CD8-positive, alpha-beta T cell (primary cell): ENCODE measurements at regions of chr2 and their contacts with region 1.

Region 1: DNA sequence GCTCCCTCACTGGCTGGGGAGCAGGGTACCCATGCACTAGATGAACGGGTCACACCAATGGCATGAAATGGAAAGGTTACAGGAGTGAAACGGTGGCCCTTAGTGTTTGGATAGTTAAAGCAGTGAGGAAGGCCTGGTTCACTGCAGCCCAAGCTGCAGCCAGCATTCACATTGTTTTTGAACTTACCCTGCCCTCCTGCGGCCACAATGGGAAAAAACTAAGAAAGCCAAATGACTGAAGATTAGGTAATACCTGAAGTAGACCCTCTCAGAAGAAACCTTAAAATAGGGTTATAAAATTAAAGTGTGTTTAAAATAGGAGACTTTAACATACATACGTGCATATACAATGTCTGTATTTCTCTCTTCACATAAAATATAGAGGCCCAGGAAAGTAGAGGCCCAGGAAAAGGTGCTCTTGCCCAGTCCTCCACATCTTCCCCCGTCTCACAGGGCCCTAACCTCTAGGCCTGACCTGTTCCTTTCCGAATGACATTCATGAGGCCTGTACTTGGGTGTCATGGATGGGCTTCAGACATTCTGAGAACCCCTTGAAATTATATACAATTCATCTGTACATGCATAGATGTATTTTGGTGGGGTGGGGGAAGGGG is 33.3 kb downstream of the DOK1 start:
- DNase-seq: peak; percentile 36 to 79 (median 58)
- ATAC-seq: peak; percentile 87
- H3K4me3 ChIP-seq: no peak overlapping the region
- H3K4me3 Mint-ChIP-seq: no peak overlapping the region
- H3K27ac ChIP-seq: no peak overlapping the region
- H3K27ac Mint-ChIP-seq: no peak overlapping the region
- H3K4me1 ChIP-seq: no peaks in the 10 kb centered on the region
- H3K4me1 Mint-ChIP-seq: peaks cover 6% of the 10 kb centered on the region
- H3K27me3 ChIP-seq: no peaks in the 10 kb centered on the region
- H3K27me3 Mint-ChIP-seq: peaks cover 8% of the 10 kb centered on the region
- CTCF ChIP-seq: peak; percentile 52

Region 2: DNA sequence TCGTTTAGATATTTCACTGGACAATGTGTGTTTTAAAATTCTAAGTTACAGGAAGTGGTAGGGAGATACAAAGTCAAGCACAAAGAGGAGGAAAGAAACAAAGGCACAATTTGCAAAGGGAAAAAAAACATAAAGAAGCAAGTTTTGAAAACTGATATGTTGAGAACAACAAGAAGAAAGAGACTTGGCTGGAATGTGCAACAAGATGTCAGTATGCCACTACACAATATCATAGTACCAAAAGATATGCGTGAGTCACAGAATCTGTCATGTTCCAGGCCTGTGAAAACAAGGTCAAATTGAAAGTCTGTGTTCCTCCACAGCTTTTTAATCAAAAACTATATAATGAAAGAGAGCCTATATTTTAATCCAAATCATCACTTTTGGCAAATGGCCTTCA is 1773.9 kb before region 1 on chr2:
- CTCF ChIA-PET with region 1: no interaction called
- POLR2A ChIA-PET with region 1: no interaction called
- intact Hi-C with region 1: no loop called
- DNase-seq: no peak
- ATAC-seq: no peak
- H3K4me3 ChIP-seq: no peak overlapping the region
- H3K4me3 Mint-ChIP-seq: no peak overlapping the region
- H3K27ac ChIP-seq: no peak overlapping the region
- H3K27ac Mint-ChIP-seq: no peak overlapping the region
- H3K4me1 ChIP-seq: no peaks in the 10 kb centered on the region
- H3K4me1 Mint-ChIP-seq: peaks cover 26% of the 10 kb centered on the region
- H3K27me3 ChIP-seq: no peaks in the 10 kb centered on the region
- H3K27me3 Mint-ChIP-seq: no peaks in the 10 kb centered on the region
- CTCF ChIP-seq: no peak

Region 3: DNA sequence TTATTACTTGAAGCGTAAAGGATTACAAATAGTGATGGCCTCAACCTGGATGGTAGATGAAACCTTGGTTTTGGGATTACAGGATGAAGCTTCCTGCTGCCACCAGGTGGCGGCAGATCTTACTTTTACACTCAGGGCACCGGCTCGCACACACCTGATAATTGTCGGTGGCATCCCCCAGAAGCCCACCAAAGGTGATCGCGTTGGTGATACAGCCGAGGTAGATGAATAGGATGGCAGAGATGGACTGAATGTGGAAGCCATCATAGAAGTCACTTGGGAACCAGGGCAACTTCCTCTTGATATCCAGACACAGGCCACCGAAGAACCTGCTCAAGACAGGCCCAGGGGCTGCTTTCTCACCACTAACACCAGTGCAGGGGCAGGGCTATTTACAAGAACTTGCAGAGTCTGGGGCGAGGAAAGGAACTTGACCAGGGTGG is 337.6 kb before region 1 on chr2:
- CTCF ChIA-PET with region 1: interaction called, 12 read pairs
- POLR2A ChIA-PET with region 1: no interaction called
- intact Hi-C with region 1: loop called in 1 of 2 experiments (anchors 1 kb)
- DNase-seq: peak; percentile 7 to 79 (median 54)
- ATAC-seq: peak; percentile 75
- H3K4me3 ChIP-seq: no peak overlapping the region
- H3K4me3 Mint-ChIP-seq: no peak overlapping the region
- H3K27ac ChIP-seq: no peak overlapping the region
- H3K27ac Mint-ChIP-seq: no peak overlapping the region
- H3K4me1 ChIP-seq: peaks cover 3% of the 10 kb centered on the region
- H3K4me1 Mint-ChIP-seq: peaks cover 2% of the 10 kb centered on the region
- H3K27me3 ChIP-seq: no peaks in the 10 kb centered on the region
- H3K27me3 Mint-ChIP-seq: no peaks in the 10 kb centered on the region
- CTCF ChIP-seq: peak; percentile 83

Region 4: GRCh38 chr2:74553892-74554645 is 33.7 kb before region 1 on chr2 and contains the start of gene LOXL3:
- CTCF ChIA-PET with region 1: interaction called, 6 read pairs
- POLR2A ChIA-PET with region 1: no interaction called
- intact Hi-C with region 1: loop called in 1 of 2 experiments (anchors 1 kb)
- DNase-seq: peak in 6 of 9 experiments; percentile 58 to 87 (median 70)
- ATAC-seq: peak; percentile 63
- H3K4me3 ChIP-seq: peak within 1 kb of the TSS; percentile 97 to 100
- H3K4me3 Mint-ChIP-seq: peak within 1 kb of the TSS; percentile 91
- H3K27ac ChIP-seq: peak within 1 kb of the TSS; percentile 66 to 77
- H3K27ac Mint-ChIP-seq: peak within 1 kb of the TSS; percentile 84
- H3K4me1 ChIP-seq: peaks cover 17% of the 10 kb centered on the region
- H3K4me1 Mint-ChIP-seq: peaks cover 10% of the 10 kb centered on the region
- H3K27me3 ChIP-seq: peaks cover 2 to 11% of the 10 kb centered on the region in 2 experiments
- H3K27me3 Mint-ChIP-seq: peaks cover 19% of the 10 kb centered on the region
- CTCF ChIP-seq: no peak
- total RNA-seq, gene LOXL3: not detected

Region 5: DNA sequence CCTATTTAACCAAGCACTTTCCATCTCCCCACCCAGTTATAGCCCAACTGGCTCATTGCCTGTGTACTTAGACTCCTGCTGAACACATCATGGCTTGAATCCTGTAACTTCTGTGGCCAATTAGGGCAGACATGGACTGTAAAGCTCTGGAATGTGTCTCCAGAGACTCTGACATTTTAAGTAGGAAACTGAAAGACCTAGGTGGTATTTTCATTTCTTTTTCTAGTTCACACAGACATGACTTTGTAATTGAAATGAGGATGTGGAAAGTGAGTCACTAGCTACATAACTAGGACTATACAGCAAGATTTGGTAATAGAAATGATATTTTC is 21.1 kb before region 1 on chr2:
- CTCF ChIA-PET with region 1: interaction called, 19 read pairs
- POLR2A ChIA-PET with region 1: no interaction called
- intact Hi-C with region 1: no loop called
- DNase-seq: no peak
- ATAC-seq: no peak
- H3K4me3 ChIP-seq: no peak overlapping the region
- H3K4me3 Mint-ChIP-seq: no peak overlapping the region
- H3K27ac ChIP-seq: no peak overlapping the region
- H3K27ac Mint-ChIP-seq: no peak overlapping the region
- H3K4me1 ChIP-seq: no peaks in the 10 kb centered on the region
- H3K4me1 Mint-ChIP-seq: no peaks in the 10 kb centered on the region
- H3K27me3 ChIP-seq: no peaks in the 10 kb centered on the region
- H3K27me3 Mint-ChIP-seq: peaks cover 30% of the 10 kb centered on the region
- CTCF ChIP-seq: no peak

Region 6: DNA sequence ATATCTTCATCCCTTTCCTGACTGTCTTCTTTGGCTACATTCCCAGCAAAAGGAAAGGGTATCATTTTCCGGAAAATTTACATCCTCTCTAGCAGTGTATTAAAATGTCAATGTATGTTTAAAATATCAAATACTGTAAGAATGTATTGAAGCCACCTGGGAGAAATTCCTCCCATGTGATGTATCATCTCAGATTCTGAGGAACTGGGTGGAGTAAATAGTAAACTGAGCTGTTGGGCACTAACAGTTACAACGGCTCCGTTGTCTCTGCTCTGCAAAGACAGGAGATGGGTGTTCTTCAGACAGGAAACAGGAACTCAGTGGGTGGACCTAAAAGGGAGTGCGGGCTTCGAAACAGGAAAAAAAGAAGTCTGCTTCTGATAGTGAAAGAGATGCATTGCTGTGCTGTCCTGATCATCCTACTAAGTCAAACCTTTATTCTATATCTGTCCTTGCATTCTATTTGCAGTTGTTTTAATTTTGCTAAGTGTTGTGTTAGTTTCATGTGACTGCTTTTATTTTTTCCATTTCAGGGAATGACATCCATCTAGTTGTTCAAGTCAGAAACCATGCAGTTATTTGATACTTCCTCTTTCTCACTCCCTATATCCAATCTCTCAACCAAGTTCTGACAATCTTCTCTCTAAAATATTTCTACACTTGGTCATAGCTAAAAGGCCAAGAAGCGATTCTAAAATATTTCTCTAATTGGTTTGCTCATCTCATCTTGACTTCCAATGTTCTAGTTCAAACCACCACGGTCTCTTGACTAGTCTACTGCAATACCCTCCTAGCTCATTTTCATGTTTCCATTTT is 13.8 kb before region 1 on chr2:
- CTCF ChIA-PET with region 1: interaction called, 19 read pairs
- POLR2A ChIA-PET with region 1: no interaction called
- intact Hi-C with region 1: no loop called
- DNase-seq: peak in 4 of 9 experiments; percentile 27 to 63 (median 45)
- ATAC-seq: peak; percentile 77
- H3K4me3 ChIP-seq: peak overlapping the region; percentile 0 to 3
- H3K4me3 Mint-ChIP-seq: peak overlapping the region; percentile 66
- H3K27ac ChIP-seq: peak overlapping the region in 1 of 2 experiments; percentile 47
- H3K27ac Mint-ChIP-seq: peak overlapping the region; percentile 75
- H3K4me1 ChIP-seq: peaks cover 14% of the 10 kb centered on the region
- H3K4me1 Mint-ChIP-seq: peaks cover 15% of the 10 kb centered on the region
- H3K27me3 ChIP-seq: no peaks in the 10 kb centered on the region
- H3K27me3 Mint-ChIP-seq: peaks cover 6% of the 10 kb centered on the region
- CTCF ChIP-seq: no peak

Region 7: GRCh38 chr2:74625658-74626425 is 38.1 kb after region 1 on chr2:
- CTCF ChIA-PET with region 1: no interaction called
- POLR2A ChIA-PET with region 1: no interaction called
- intact Hi-C with region 1: no loop called
- DNase-seq: no peak
- ATAC-seq: no peak
- H3K4me3 ChIP-seq: no peak overlapping the region
- H3K4me3 Mint-ChIP-seq: no peak overlapping the region
- H3K27ac ChIP-seq: no peak overlapping the region
- H3K27ac Mint-ChIP-seq: no peak overlapping the region
- H3K4me1 ChIP-seq: no peaks in the 10 kb centered on the region
- H3K4me1 Mint-ChIP-seq: no peaks in the 10 kb centered on the region
- H3K27me3 ChIP-seq: no peaks in the 10 kb centered on the region
- H3K27me3 Mint-ChIP-seq: no peaks in the 10 kb centered on the region
- CTCF ChIP-seq: no peak

Region 8: DNA sequence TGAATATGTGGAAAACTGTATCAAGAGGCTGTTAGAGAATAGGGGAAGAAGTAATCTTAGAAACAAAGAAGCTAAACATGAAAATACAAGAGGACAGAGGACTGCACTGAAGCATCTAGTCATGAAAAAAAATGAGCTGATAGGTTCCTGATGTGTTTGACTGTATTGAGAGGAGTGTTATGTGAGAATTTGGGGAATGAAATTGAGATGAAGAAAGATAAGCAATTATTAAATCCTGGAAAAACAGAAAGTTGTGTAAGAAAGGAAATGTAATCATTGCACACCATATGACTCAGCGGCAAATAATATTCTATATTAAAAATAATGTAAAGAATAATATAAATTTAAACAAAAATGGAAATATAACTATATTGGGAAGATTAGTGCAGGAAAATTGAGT is 137.5 kb after region 1 on chr2:
- CTCF ChIA-PET with region 1: no interaction called
- POLR2A ChIA-PET with region 1: no interaction called
- intact Hi-C with region 1: no loop called
- DNase-seq: no peak
- ATAC-seq: no peak
- H3K4me3 ChIP-seq: no peak overlapping the region
- H3K4me3 Mint-ChIP-seq: no peak overlapping the region
- H3K27ac ChIP-seq: no peak overlapping the region
- H3K27ac Mint-ChIP-seq: no peak overlapping the region
- H3K4me1 ChIP-seq: no peaks in the 10 kb centered on the region
- H3K4me1 Mint-ChIP-seq: no peaks in the 10 kb centered on the region
- H3K27me3 ChIP-seq: no peaks in the 10 kb centered on the region
- H3K27me3 Mint-ChIP-seq: peaks cover 16% of the 10 kb centered on the region
- CTCF ChIP-seq: no peak